Activated T-helper 2 cell treated with anti-CD3 and anti-CD28 coated beads, Interferon-gamma antibody, Interleukin-2, Interleukin-4, amounts not matched to agents 10 μg/mL and 5 μg/mL and 100 μg/mL, durations not matched to agents 14 hours and 24 hours and 36 hours (primary cell): ENCODE measurements at regions of chr6 and their contacts with region 1.

Region 1: DNA sequence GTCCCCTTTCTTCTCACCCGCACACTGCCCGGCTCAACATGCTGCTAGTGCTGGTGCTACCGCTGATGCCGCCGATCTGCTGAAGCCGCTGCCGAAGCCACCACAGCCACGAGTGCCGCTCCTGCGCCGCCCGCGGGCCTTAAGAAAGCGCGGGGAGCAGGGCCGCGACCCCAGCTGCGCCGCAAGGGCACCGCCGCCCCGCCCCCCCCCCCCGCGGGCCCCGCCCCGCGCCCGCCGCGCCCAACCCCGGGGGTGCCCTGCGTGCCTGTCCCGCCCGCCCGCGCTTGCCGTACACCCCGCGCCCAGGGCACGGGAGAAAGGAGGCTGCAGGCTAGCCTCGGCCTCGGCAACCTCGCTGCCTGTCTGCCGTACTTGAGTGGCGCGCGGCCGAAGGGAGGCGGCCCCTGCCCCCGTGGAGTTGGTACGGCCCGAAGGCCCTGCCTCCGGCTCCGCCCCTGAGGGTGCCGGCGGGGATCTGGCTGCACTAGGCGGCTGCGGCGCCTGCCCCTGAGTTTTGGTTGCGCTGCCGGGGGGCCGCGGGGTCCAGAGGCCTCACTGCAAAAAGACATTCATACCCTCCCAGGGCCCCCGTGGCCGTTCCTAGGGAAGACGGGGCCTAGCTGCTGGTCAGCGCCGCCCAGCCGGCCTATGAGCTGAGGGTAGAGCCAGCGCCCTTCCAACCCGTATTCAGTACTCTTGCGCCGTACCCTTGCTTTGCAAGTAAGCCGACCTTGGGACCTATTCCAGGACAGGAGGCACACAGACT is at the start of gene SOD2:
- DNase-seq: peak; percentile 80
- H3K4me3 Mint-ChIP-seq: peak within 1 kb of the TSS; percentile 92
- H3K27ac Mint-ChIP-seq: peak within 1 kb of the TSS; percentile 95
- H3K4me1 Mint-ChIP-seq: peaks cover 32% of the 10 kb centered on the region
- H3K27me3 Mint-ChIP-seq: no peaks in the 10 kb centered on the region
- total RNA-seq, gene SOD2: 54.3 and 60.8 TPM in 2 replicates

Region 2: GRCh38 chr6:159726918-159727716 is 33.8 kb after region 1 on chr6 and contains the start of gene WTAP:
- intact Hi-C with region 1: loop called (anchors 1 kb)
- DNase-seq: peak; percentile 95
- H3K4me3 Mint-ChIP-seq: peak within 1 kb of the TSS; percentile 94
- H3K27ac Mint-ChIP-seq: peak within 1 kb of the TSS; percentile 99
- H3K4me1 Mint-ChIP-seq: peaks cover 38% of the 10 kb centered on the region
- H3K27me3 Mint-ChIP-seq: no peaks in the 10 kb centered on the region
- total RNA-seq, gene WTAP: 110 and 114 TPM in 2 replicates

Region 3: GRCh38 chr6:159761873-159762680 is 68.8 kb after region 1 on chr6 and contains the start of gene ACAT2:
- intact Hi-C with region 1: loop called (anchors 1 kb)
- DNase-seq: peak; percentile 91
- H3K4me3 Mint-ChIP-seq: peak within 1 kb of the TSS; percentile 93
- H3K27ac Mint-ChIP-seq: peak within 1 kb of the TSS; percentile 93
- H3K4me1 Mint-ChIP-seq: peaks cover 46% of the 10 kb centered on the region
- H3K27me3 Mint-ChIP-seq: no peaks in the 10 kb centered on the region
- total RNA-seq, gene ACAT2: 108 and 109 TPM in 2 replicates

Region 4: DNA sequence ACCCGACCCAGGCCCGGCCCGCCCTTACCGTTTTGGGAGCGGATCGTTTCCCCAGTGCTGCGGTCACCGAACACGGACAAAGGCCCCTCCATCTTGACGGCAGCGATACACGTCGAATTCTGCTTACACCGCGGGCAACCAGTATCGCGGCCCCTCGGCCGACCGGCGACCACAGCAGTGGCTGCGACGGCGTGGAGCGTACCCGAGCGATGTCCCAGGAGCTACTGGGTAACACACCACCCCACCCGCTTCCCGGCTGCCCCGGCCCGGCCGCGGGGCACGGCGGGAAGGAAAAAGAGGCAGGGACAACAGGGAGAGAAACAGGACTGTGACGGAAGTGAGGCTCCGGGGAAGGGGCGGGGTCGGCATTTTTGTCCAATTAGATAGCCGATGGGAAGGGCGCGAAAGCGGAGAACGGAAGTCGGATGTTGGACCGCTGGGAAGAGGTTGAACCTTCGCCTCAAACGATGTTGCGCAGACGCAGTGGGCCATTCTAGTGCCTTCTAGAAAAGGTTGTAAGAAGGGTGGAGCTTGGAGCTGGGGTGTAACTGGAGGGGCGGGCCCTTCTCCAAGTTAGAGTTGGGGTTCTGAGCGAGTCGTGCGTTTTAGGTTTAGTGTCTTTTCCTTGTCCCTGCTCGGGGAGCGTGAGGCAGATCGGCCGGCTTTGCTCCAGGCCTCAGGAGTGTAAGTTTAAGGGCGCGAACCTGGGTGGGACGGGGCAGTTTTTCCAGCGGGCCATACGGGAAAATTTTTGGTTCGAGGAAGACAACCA is 96.3 kb after region 1 on chr6 and contains the start of gene TCP1:
- intact Hi-C with region 1: loop called (anchors 1 kb)
- DNase-seq: peak; percentile 99
- H3K4me3 Mint-ChIP-seq: peak within 1 kb of the TSS; percentile 96
- H3K27ac Mint-ChIP-seq: peak within 1 kb of the TSS; percentile 97
- H3K4me1 Mint-ChIP-seq: peaks cover 46% of the 10 kb centered on the region
- H3K27me3 Mint-ChIP-seq: no peaks in the 10 kb centered on the region
- total RNA-seq, gene TCP1: 431 and 438 TPM in 2 replicates

Region 5: DNA sequence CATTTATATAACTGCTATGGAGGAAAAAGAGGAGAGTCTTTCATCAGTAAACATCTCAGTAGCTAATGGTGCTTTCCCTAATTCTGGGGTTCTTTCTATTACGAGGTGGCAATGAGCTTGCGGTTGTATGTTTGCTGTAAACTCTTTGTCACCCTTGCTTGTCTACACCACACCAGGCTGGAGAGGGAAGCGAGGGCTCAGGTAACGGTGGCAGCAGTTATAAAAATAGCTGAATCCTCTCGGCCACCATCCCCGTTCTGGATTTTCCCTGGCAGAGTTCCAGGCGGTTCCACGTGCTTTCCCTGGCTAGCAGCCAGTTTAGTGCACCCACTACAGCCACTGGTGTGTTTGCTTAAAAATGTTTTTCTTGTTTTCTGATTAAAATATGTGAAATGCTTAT is 236.5 kb after region 1 on chr6:
- intact Hi-C with region 1: loop called (anchors 5 kb)
- DNase-seq: no peak
- H3K4me3 Mint-ChIP-seq: no peak overlapping the region
- H3K27ac Mint-ChIP-seq: peak overlapping the region; percentile 5
- H3K4me1 Mint-ChIP-seq: peaks cover 28% of the 10 kb centered on the region
- H3K27me3 Mint-ChIP-seq: peaks cover 9% of the 10 kb centered on the region

Region 6: GRCh38 chr6:159979136-159979874 is 286.0 kb after region 1 on chr6:
- intact Hi-C with region 1: loop called (anchors 2 kb)
- DNase-seq: peak; percentile 40
- H3K4me3 Mint-ChIP-seq: peak overlapping the region; percentile 77
- H3K27ac Mint-ChIP-seq: peak overlapping the region; percentile 93
- H3K4me1 Mint-ChIP-seq: peaks cover 88% of the 10 kb centered on the region
- H3K27me3 Mint-ChIP-seq: no peaks in the 10 kb centered on the region

Region 7: DNA sequence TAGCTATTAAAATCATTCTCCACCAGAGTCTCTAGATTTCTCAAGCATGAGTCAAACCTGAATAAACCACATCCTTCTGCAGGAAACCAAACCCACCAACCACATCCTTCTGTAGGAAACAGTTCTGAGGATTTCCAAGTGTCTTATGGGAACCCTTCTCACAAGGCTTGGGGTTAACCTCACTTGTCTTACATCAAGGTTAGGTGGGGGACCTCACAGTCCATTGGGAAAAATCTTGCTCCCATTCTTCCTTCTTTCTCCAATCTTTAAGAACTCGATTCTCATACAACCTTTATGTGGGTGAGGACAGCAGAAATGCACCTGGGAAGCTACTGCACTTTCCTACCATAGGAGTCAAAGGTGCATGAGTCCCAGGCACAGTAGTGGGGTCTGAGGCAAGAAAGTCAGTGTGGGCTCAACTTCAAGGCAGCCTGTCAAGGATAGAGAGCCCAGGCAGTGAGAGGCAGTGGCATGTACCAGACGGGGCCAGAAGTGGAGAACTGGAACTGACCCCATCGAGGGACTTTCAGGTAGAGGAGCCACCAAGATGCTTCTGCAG is 769.3 kb after region 1 on chr6:
- intact Hi-C with region 1: loop called (anchors 1 kb)
- DNase-seq: peak; percentile 67
- H3K4me3 Mint-ChIP-seq: peak overlapping the region; percentile 26
- H3K27ac Mint-ChIP-seq: peak overlapping the region; percentile 63
- H3K4me1 Mint-ChIP-seq: peaks cover 51% of the 10 kb centered on the region
- H3K27me3 Mint-ChIP-seq: peaks cover 15% of the 10 kb centered on the region